Activated naive CD4-positive, alpha-beta T cell treated with anti-CD3 and anti-CD28 coated beads, Interleukin-2, amount 10 ng/mL, durations not matched to agents 7 days and 5 days (primary cell): ENCODE measurements at regions of chr22 and their contacts with region 1.

Region 1: GRCh38 chr22:37260901-37261336 is 16.9 kb upstream of the RAC2 start:
- DNase-seq: peak; percentile 74
- H3K4me3 Mint-ChIP-seq: no peak overlapping the region
- H3K27ac Mint-ChIP-seq: no peak overlapping the region
- H3K4me1 Mint-ChIP-seq: peaks cover 22% of the 10 kb centered on the region
- H3K27me3 Mint-ChIP-seq: peaks cover 63% of the 10 kb centered on the region

Region 2: DNA sequence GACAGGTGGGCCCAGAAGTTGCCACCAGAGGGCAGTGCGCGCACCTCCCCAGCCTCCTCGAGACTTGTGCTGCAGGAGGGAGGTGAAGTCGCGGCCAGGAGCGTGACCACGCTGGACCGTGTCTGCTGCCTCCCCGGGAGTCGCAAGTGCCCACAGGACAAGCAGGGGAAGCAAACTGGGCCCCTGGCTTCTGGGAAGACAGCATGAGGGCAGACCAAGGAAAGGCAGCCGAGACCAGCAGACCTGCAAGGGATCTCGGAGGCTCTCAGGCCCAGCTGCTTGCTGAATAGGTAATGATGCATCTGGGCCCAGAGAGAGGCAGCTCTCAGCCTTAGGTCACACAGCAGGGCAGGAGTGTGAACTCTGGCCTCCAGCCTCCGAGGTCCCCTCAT is 94.2 kb before region 1 on chr22:
- CTCF ChIA-PET with region 1: interaction called, 24 read pairs
- DNase-seq: peak; percentile 89
- H3K4me3 Mint-ChIP-seq: peak overlapping the region; percentile 64
- H3K27ac Mint-ChIP-seq: peak overlapping the region; percentile 85
- H3K4me1 Mint-ChIP-seq: peaks cover 89% of the 10 kb centered on the region
- H3K27me3 Mint-ChIP-seq: peaks cover 13% of the 10 kb centered on the region

Region 3: DNA sequence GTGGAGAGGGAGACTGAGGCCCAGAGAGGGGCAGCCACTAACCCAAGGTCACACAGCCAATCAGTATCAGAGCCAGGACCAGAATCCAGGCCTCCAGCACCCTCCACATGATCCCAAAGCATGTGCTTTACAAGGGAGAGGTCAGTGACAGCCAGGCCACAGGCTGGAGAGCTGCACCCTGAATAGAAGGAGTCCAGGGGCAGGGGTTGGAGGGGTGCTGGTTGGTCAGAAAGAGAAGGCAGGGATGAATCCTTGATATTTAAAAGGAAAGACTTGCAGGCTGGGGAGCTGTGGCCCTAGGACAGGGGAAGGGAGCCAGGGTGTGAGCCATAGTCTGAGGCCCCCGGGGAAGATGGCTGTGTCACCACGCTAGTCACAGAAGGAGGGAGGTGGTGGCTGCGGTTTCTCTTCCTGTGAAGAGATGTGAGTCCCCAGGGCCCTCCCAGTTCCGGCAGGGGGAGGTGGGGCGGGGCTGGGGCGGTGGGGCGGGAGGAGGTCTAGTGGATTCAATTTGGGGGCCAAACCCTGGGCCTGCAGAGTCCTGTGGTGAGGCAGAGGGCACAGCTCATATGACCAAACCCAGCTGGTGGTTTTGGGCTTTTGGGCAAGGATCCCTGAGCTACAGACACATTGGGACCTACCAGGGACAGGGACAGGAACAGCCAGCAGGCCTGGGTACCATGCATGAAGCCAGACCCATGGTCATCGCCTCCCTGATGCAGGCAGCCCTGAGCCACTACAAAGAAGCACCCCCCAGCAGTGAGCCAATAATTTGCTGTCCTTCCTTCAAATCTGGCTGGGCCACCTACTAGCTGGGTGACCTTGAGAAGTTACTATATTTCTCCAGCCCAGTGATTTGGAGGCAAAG is 30.9 kb before region 1 on chr22:
- CTCF ChIA-PET with region 1: interaction called, 20 read pairs
- DNase-seq: peak; percentile 96
- H3K4me3 Mint-ChIP-seq: peak overlapping the region; percentile 71
- H3K27ac Mint-ChIP-seq: peak overlapping the region; percentile 98
- H3K4me1 Mint-ChIP-seq: peaks cover 92% of the 10 kb centered on the region
- H3K27me3 Mint-ChIP-seq: no peaks in the 10 kb centered on the region

Region 4: GRCh38 chr22:37273126-37273845 is 12.4 kb after region 1 on chr22:
- CTCF ChIA-PET with region 1: interaction called, 16 read pairs
- DNase-seq: no peak
- H3K4me3 Mint-ChIP-seq: no peak overlapping the region
- H3K27ac Mint-ChIP-seq: no peak overlapping the region
- H3K4me1 Mint-ChIP-seq: peaks cover 28% of the 10 kb centered on the region
- H3K27me3 Mint-ChIP-seq: peaks cover 57% of the 10 kb centered on the region

Region 5: DNA sequence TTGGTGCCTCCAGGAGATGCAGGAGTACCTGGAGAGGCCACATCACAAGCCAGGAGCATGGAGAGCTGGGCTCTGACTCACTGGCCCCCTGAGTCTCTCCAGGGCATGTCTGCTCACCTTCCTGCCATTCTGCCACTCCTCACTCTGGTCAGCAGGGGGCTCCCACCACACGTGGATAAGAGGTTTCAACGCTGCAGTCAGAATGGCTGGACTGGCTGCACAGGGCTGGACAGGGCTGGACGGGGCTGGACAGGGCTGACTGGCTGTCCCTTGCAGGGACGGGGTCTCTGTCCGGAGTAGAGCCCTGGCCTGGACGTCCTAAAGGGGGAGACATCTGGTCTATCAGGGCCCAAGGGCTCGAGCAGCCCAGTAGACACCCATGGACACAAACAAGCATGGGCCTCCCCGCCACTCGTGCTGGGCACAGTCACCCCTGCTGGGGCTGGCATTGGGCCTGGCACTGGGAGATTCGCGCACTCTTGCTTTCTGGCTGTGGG is 56.0 kb after region 1 on chr22:
- CTCF ChIA-PET with region 1: interaction called, 26 read pairs
- DNase-seq: peak; percentile 81
- H3K4me3 Mint-ChIP-seq: no peak overlapping the region
- H3K27ac Mint-ChIP-seq: no peak overlapping the region
- H3K4me1 Mint-ChIP-seq: peaks cover 41% of the 10 kb centered on the region
- H3K27me3 Mint-ChIP-seq: peaks cover 51% of the 10 kb centered on the region